Cardiac septum (tissue), 1 donor: ENCODE measurements at regions of chr10 and their contacts with region 1.

Region 1: DNA sequence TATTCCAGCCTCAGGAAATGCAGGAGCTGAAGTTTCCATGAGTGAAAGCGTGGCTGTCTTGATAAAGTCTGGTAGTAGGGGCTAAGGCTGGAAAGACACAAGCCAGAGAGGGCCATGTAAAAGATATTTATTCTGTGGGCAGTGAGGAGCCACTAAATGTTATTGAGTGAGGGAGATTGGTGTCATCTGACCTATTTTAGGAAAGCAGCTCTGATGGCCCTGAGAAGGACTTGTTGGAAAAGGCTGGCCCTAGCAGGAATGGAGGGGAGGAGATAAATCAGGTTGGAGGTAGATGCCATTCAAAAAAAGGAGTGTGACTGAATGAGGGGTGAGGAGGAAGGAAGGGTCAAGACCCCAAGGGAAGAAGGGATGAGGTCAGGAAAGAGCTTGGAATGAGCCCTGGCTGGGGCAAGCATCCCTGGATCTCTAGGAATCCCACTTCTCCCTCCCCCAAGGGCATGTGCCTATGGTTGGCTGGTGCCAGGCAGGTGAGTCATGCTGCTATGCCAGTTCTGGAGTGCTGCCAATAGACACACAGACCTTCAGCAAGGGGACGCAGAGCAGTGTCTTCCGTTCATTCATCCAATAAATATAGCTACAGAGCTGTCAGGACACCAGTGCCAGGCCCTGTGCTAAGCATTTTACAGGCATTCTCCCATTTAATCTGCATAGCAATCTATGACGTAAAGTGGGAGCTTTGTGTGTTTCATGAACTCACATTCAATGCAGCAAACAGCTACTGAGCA is 2.0 kb downstream of the ANKRD2 start:
- DNase-seq: peak; percentile 85

Region 2: GRCh38 chr10:97596101-97597062 is 21.8 kb after region 1 on chr10:
- intact Hi-C with region 1: loop called (anchors 1 kb)
- DNase-seq: peak; percentile 75